ENCODE measurements at regions of chr12 and their contacts with region 1.

Region 1: DNA sequence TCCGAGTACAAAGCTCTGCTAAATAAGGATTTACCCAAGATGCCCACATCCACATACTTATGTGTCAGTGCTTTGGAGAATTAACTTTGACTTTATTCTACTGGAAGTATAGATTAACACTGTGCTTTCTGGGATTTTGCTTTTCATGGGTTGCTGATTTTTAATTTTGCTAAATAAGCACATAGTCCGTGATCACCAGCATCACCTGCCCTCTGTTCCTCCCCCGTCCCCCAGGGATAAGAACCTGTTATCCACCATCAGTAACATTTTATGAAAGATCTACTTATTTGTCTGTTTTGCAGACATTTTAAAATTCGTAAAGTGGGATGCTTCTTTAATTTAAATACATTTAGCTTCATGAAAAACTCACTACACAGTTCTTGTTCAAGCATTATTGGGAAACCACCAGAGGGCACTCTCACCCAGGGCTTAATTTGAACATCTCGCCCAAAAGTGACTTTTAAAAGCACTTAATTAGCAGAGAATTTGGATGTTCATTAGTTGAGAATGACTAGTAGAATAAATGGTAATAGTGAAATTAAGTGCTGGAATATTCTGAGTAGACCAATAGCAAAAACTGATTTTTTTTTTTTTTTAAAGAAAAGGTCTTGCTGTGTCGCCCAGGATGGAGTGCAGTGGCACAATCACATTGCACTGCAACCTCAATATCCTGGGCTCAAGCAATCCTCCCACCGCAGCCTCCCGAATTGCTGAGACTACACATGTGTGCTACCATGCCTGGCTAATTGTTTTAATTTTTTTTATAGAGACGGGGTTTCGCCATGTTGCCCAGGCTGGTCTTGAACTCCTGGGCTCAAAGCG is 35.7 kb downstream of the MRPL42 start:
- DNase-seq: peak; percentile 26
- H3K4me3 ChIP-seq: no peak overlapping the region
- H3K27ac ChIP-seq: no peak overlapping the region
- H3K4me1 ChIP-seq: peaks cover 0 to 2% of the 10 kb centered on the region in 2 experiments; a peak in 1 of 4 replicates
- H3K27me3 ChIP-seq: no peaks in the 10 kb centered on the region
- CTCF ChIP-seq: peak; percentile 96
- EP300 ChIP-seq: no peak
- RAD21 ChIP-seq: peak; percentile 82

Region 2: GRCh38 chr12:93484315-93484981 is 18.6 kb before region 1 on chr12:
- CTCF ChIA-PET with region 1: interaction called, 12 read pairs
- POLR2A ChIA-PET with region 1: no interaction called
- DNase-seq: no peak
- H3K4me3 ChIP-seq: no peak overlapping the region
- H3K27ac ChIP-seq: no peak overlapping the region
- H3K4me1 ChIP-seq: no peaks in the 10 kb centered on the region
- H3K27me3 ChIP-seq: no peaks in the 10 kb centered on the region
- CTCF ChIP-seq: no peak
- EP300 ChIP-seq: no peak
- RAD21 ChIP-seq: no peak

Region 3: DNA sequence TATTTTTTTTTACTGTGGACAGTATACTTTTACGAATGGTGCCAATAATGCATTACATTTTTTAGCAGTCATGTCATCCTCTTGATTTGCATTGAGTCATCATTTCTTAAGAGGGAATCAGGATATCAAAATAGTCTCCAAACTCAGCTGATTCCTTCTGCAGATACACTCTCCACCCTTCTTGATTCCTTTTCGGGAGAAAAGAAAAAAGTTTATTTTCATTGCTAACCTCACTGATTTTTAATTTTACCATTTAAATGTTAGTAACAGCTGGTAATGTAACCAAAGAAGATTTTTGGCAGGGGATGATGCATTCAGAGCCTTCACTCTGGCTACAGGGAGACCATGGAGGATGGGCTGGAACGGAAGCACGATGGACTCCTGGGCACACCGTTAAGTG is 11.8 kb after region 1 on chr12:
- CTCF ChIA-PET with region 1: interaction called, 41 read pairs
- POLR2A ChIA-PET with region 1: no interaction called
- DNase-seq: no peak
- H3K4me3 ChIP-seq: 0 out of 4 replicates have a peak overlapping the region, but pooled peaks of 1 of the 2 experiments have one; percentile 35
- H3K27ac ChIP-seq: peak overlapping the region in 1 of 2 experiments; percentile 76; a peak in 2 of 4 replicates
- H3K4me1 ChIP-seq: peaks cover 2 to 7% of the 10 kb centered on the region in 2 experiments; a peak in 3 of 4 replicates
- H3K27me3 ChIP-seq: no peaks in the 10 kb centered on the region
- CTCF ChIP-seq: no peak
- EP300 ChIP-seq: no peak
- RAD21 ChIP-seq: no peak

Region 4: GRCh38 chr12:93536766-93537488 is 33.9 kb after region 1 on chr12:
- CTCF ChIA-PET with region 1: interaction called, 14 read pairs
- POLR2A ChIA-PET with region 1: no interaction called
- DNase-seq: peak; percentile 15
- H3K4me3 ChIP-seq: no peak overlapping the region
- H3K27ac ChIP-seq: peak overlapping the region in 1 of 2 experiments; percentile 24; a peak in 1 of 4 replicates
- H3K4me1 ChIP-seq: peaks cover 5 to 13% of the 10 kb centered on the region in 2 experiments; a peak in 3 of 4 replicates
- H3K27me3 ChIP-seq: no peaks in the 10 kb centered on the region
- CTCF ChIP-seq: no peak
- EP300 ChIP-seq: no peak
- RAD21 ChIP-seq: no peak

Region 5: GRCh38 chr12:93742110-93742934 is 239.3 kb after region 1 on chr12:
- CTCF ChIA-PET with region 1: interaction called, 10 read pairs
- POLR2A ChIA-PET with region 1: no interaction called
- DNase-seq: peak; percentile 93
- H3K4me3 ChIP-seq: peak overlapping the region; percentile 68 to 73
- H3K27ac ChIP-seq: peak overlapping the region; percentile 90 to 97
- H3K4me1 ChIP-seq: peaks cover 6 to 9% of the 10 kb centered on the region in 2 experiments; a peak in 2 of 4 replicates
- H3K27me3 ChIP-seq: no peaks in the 10 kb centered on the region
- CTCF ChIP-seq: peak; percentile 50
- EP300 ChIP-seq: 0 out of 4 replicates have a peak, but pooled peaks of 1 of the 2 experiments have one; percentile 6
- RAD21 ChIP-seq: peak; percentile 47

Region 6: GRCh38 chr12:93766796-93767523 is 263.9 kb after region 1 on chr12:
- CTCF ChIA-PET with region 1: interaction called, 18 read pairs
- POLR2A ChIA-PET with region 1: no interaction called
- DNase-seq: peak; percentile 41
- H3K4me3 ChIP-seq: no peak overlapping the region
- H3K27ac ChIP-seq: peak overlapping the region in 1 of 2 experiments; percentile 52; a peak in 2 of 4 replicates
- H3K4me1 ChIP-seq: peaks cover 0 to 21% of the 10 kb centered on the region in 2 experiments; a peak in 3 of 4 replicates
- H3K27me3 ChIP-seq: no peaks in the 10 kb centered on the region
- CTCF ChIP-seq: peak; percentile 76
- EP300 ChIP-seq: no peak
- RAD21 ChIP-seq: peak; percentile 87

Measured in SK-N-SH (cell line).